ENCODE measurements at regions of chr4 and their contacts with region 1.

Region 1: GRCh38 chr4:90174611-90175133 is 47.5 kb downstream of the CCSER1 start:
- DNase-seq: no peak

Region 2: GRCh38 chr4:90127706-90128345 is 46.8 kb before region 1 on chr4:
- intact Hi-C with region 1: loop called in 1 of 2 experiments (anchors 2 kb)
- DNase-seq: peak; percentile 79

Region 3: DNA sequence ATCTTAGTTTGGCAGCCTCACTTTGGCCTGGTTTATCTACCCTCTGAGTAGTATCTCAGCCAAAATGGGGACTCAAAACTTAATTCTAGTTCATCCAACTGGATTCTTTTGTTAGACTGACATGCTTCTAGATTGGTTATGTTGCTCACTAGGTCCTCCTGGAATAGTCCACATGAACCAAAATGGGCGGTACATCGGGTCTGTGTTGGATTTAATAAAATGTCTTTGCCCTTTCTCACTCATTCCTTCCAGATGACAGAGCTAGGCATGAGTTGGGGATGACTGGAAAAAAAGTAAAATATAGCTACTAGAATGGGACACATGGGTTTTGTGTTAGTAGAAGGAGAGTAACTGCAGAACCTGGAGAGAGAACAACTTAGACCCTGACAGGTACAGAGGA is 200.4 kb after region 1 on chr4:
- intact Hi-C with region 1: loop called in 1 of 2 experiments (anchors 5 kb)
- DNase-seq: no peak

Measured in posterior vena cava (tissue), 2 donors.